GM12878 (cell line): ENCODE measurements at regions of chr10 and their contacts with region 1.

Region 1: DNA sequence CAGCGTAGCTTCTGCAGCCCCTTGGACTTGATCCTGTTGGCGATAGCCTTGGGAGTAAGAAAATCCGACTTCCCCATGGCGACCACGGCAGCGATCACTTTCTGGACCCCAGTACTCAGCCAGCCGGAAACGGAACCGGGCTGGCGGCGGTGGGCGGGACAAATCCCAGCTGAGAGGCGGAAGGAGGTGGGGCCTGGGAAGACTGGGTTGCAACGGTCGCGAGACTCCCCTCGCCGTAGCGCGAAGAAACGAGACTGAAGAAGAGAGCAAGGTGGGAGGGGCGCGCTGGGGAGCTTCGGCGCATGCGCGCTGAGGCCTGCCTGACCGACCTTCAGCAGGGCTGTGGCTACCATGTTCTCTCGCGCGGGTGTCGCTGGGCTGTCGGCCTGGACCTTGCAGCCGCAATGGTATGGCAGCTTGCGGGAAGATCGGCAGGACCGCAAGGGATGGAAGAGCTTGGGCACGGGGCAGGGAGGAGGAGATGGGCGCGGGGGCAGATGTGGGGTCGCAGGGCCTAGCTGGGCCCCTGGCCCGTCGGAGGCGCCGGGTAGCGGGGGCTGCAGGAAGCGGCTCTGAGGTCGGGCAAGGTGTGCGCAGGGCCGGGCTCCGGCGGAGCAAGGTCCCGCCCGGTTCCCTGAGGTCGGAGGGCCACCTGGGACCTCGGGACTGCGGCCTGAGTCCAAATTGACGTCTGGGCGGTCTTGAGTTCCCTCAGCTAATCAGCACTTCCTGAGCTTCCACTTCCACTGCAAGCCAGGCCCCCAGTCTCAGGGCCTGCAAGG is at the starts of genes ATP5F1C and KIN:
- DNase-seq: peak; percentile 86
- ATAC-seq: peak; percentile 93
- H3K4me3 ChIP-seq: peak within 1 kb of the TSS; percentile 97
- H3K27ac ChIP-seq: peak within 1 kb of the TSS; percentile 88
- H3K4me1 ChIP-seq: no peaks in the 10 kb centered on the region; the same call in 1 of the 2 replicates
- H3K27me3 ChIP-seq: no peaks in the 10 kb centered on the region
- CTCF ChIP-seq: no peak
- EP300 ChIP-seq: no peak
- POLR2A ChIP-seq: peak; percentile 97
- RAD21 ChIP-seq: no peak
- polyA plus RNA-seq, gene ATP5F1C: 803 to 978 TPM
- polyA plus RNA-seq, gene KIN: 24.4 to 33.2 TPM

Region 2: DNA sequence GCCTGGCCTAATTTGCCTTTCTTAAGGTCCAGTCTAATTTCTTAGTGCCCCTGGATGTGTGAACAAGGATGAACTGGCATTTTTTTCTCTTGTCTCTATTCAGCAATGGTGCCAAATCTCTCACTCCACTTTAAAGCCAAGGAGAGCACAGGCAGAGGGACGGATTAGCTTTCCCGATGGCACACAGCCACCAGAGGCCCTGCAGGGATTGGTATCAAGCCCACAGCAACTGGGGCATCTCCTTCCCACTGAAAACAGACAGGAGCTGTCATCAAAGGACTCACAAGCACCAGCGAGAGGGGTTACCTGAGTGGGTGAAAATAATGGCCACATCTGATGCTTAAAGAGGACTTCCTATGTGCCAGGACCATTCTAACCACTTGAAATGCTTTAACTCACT is 204.4 kb before region 1 on chr10:
- CTCF ChIA-PET with region 1: no interaction called
- POLR2A ChIA-PET with region 1: no interaction called
- RAD21 ChIA-PET with region 1: no interaction called
- SMC1A ChIA-PET with region 1: no interaction called
- in situ Hi-C with region 1: no loop called
- intact Hi-C with region 1: no loop called
- DNase-seq: no peak
- ATAC-seq: no peak
- H3K4me3 ChIP-seq: no peak overlapping the region
- H3K27ac ChIP-seq: no peak overlapping the region
- H3K4me1 ChIP-seq: no peaks in the 10 kb centered on the region
- H3K27me3 ChIP-seq: no peaks in the 10 kb centered on the region; a peak in 1 of 4 replicates
- CTCF ChIP-seq: no peak
- EP300 ChIP-seq: no peak
- POLR2A ChIP-seq: no peak
- RAD21 ChIP-seq: no peak

Region 3: DNA sequence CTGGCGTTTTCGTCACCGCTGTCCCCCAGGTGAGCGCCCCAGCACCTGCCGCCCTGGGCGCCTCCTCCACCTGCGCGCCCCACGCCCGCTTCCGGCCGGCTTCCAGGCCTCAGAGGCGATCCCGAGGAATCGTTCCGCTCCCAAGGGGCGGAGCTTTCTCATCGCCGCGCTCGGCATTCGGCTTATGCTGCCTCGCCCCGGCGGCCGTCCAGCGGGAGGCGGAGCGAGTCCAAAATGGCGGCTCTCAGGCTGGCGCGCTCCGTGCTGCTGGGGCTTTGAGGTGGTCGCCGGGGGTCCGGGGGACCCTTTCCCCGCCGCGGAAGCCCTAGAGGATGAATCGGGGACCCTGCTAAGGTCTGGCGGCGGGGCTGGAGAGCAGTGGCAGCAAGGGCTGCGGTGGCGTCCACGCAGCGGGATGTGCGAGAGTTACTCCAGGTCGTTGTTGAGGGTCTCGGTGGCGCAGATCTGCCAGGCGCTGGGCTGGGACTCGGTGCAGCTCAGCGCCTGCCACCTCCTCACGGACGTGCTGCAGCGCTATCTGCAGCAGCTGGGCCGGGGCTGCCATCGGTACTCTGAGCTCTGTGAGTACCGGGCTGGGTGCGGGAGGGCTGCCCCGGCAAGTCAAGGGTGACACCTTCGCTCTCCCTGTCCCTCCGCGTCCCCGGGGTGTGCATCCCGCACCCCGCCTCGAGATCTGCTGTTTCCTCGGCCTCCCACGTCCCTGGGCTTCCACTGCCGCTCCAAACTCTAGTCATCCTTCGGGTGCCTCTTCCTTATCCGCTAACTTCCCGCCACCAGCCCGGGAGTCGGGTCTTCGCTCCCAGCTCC is 30.5 kb after region 1 on chr10 and contains the start of gene TAF3:
- CTCF ChIA-PET with region 1: interaction called, 24 read pairs
- POLR2A ChIA-PET with region 1: interaction called, 10 read pairs
- RAD21 ChIA-PET with region 1: interaction called, 7 read pairs
- SMC1A ChIA-PET with region 1: interaction called, 7 read pairs
- in situ Hi-C with region 1: no loop called
- intact Hi-C with region 1: loop called (anchors 1 kb)
- DNase-seq: peak; percentile 55
- ATAC-seq: peak; percentile 89
- H3K4me3 ChIP-seq: peak within 1 kb of the TSS; percentile 93
- H3K27ac ChIP-seq: peak within 1 kb of the TSS; percentile 75
- H3K4me1 ChIP-seq: no peaks in the 10 kb centered on the region
- H3K27me3 ChIP-seq: peaks cover 0 to 2% of the 10 kb centered on the region in 2 experiments; a peak in 1 of 4 replicates
- CTCF ChIP-seq: no peak
- EP300 ChIP-seq: no peak
- POLR2A ChIP-seq: peak; percentile 97
- RAD21 ChIP-seq: no peak
- polyA plus RNA-seq, gene TAF3: 2.0 to 3.0 TPM